ENCODE measurements at regions of chr2 and their contacts with region 1.

Region 1: GRCh38 chr2:42663106-42663780 is 94.8 kb downstream of the MTA3 start:
- DNase-seq: peak; percentile 52 to 60 (median 56)
- H3K4me3 ChIP-seq: no peak overlapping the region
- H3K4me3 Mint-ChIP-seq: no peak overlapping the region
- H3K27ac ChIP-seq: no peak overlapping the region
- H3K27ac Mint-ChIP-seq: peak overlapping the region in 1 of 7 donors; percentile 14
- H3K4me1 ChIP-seq: no peaks in the 10 kb centered on the region
- H3K4me1 Mint-ChIP-seq: peaks cover 0 to 4% (median 1%) of the 10 kb centered on the region in 4 donors
- H3K27me3 ChIP-seq: no peaks in the 10 kb centered on the region
- H3K27me3 Mint-ChIP-seq: no peaks in the 10 kb centered on the region

Region 2: DNA sequence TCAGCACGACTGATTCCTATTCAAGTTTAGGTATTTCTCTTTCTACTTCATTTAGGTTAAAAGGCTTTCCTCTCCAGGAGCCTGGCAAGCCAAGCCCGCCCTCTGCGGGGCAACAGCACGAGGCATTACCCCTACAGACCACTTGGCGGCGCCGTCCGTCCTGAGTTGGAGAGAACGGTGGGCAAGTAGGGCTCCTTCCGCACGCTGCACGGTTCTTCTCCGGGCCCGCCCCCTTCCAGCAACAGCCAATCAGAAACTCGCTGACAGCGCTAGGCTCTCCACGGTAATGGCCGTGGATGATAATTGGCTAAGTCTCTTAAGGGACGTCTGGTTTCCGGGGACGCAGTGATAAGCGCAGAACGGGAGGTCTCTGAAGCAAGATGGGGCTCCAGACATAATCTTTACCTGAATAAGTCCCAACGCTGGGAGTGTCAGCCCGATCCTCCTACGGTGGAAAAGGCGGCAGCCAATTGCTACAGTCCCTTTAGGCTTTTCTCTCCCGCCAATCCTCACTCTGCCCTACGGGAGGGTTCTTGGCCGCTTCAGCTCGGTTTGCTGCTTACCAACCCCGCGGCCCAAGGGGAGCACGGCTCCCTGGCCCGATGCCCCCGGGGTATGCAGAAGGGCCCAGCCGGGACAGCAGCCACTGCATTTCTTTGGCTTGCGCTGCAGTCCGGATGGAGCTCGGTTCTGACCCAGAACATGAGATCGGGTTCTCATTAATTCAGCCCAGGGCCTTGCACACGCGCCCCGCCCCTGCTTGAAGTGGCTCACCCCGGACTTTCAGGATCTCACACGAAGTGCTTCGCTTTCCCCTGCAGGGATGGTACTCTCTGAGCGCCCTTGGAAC is 822.3 kb before region 1 on chr2:
- CTCF ChIA-PET with region 1: no interaction called
- POLR2A ChIA-PET with region 1: no interaction called
- intact Hi-C with region 1: loop called (anchors 5 kb)
- DNase-seq: peak; percentile 97 to 98 (median 97)
- H3K4me3 ChIP-seq: peak overlapping the region; percentile 85 to 86
- H3K4me3 Mint-ChIP-seq: peak overlapping the region; percentile 90 to 100 (median 96)
- H3K27ac ChIP-seq: peak overlapping the region; percentile 75
- H3K27ac Mint-ChIP-seq: peak overlapping the region; percentile 85 to 98 (median 94)
- H3K4me1 ChIP-seq: peaks cover 10% of the 10 kb centered on the region
- H3K4me1 Mint-ChIP-seq: peaks cover 5 to 16% (median 11%) of the 10 kb centered on the region in 4 donors
- H3K27me3 ChIP-seq: peaks cover 3% of the 10 kb centered on the region
- H3K27me3 Mint-ChIP-seq: peaks cover 11 to 16% of the 10 kb centered on the region in 2 donors

Region 3: DNA sequence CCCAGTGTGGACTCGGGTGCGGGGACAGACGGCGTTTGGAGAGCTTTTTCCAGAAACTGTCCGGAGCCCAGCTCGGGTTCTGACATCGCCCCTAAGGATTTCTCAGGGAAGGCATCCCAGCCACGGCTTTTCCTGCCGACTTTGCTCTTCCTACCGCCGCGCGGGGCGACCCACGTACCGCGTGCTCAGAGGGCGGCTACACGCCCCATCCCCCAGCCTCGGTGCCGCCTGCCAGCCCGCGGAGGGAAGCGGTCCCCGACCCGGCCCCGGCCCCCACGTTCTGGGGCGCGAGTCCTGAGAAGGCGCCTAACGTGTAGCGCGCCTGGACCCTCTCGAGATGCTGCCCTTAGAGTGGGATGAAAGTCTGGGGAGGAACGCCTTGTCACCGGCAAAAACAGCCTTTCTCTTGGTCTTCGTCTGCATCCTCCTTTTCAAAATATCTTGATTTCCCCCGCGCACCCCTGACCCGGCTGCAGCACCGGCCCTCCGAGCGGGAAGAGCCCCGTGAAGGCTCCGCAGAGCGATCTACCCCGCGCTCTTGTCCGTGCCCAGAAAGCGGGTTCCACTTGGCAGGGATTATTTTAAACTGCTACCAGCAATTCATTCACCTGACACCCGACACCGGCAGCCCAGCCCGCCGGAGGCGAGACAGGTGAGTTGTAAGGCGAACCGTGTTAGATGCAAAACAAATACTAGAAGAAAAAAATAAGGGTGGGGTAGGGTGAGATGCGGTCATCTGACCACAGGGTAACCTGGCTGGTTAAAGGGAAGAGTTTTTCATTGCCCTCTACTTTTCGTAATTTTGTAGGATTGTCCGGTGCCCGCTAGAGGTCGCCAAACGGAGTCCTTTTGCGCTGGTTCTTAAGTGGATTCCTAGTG is 168.6 kb before region 1 on chr2:
- CTCF ChIA-PET with region 1: interaction called, 38 read pairs
- POLR2A ChIA-PET with region 1: no interaction called
- intact Hi-C with region 1: loop called (anchors 1 kb)
- DNase-seq: peak; percentile 69 to 74 (median 70)
- H3K4me3 ChIP-seq: peak overlapping the region; percentile 66 to 77
- H3K4me3 Mint-ChIP-seq: peak overlapping the region; percentile 91 to 98 (median 94)
- H3K27ac ChIP-seq: no peak overlapping the region
- H3K27ac Mint-ChIP-seq: peak overlapping the region in 5 of 7 donors; percentile 44 to 79 (median 69)
- H3K4me1 ChIP-seq: no peaks in the 10 kb centered on the region
- H3K4me1 Mint-ChIP-seq: peaks cover 2 to 15% (median 7%) of the 10 kb centered on the region in 4 donors
- H3K27me3 ChIP-seq: peaks cover 9% of the 10 kb centered on the region
- H3K27me3 Mint-ChIP-seq: peaks cover 11 to 22% of the 10 kb centered on the region in 2 donors

Region 4: GRCh38 chr2:42513257-42513918 is 149.9 kb before region 1 on chr2:
- CTCF ChIA-PET with region 1: interaction called, 10 read pairs
- POLR2A ChIA-PET with region 1: no interaction called
- intact Hi-C with region 1: loop called (anchors 1 kb)
- DNase-seq: peak in 2 of 5 donors; percentile 7 to 14
- H3K4me3 ChIP-seq: no peak overlapping the region
- H3K4me3 Mint-ChIP-seq: no peak overlapping the region
- H3K27ac ChIP-seq: no peak overlapping the region
- H3K27ac Mint-ChIP-seq: no peak overlapping the region
- H3K4me1 ChIP-seq: no peaks in the 10 kb centered on the region
- H3K4me1 Mint-ChIP-seq: peaks cover 0 to 5% (median 3%) of the 10 kb centered on the region in 4 donors
- H3K27me3 ChIP-seq: no peaks in the 10 kb centered on the region
- H3K27me3 Mint-ChIP-seq: peaks cover 0 to 5% of the 10 kb centered on the region in 2 donors

Region 5: DNA sequence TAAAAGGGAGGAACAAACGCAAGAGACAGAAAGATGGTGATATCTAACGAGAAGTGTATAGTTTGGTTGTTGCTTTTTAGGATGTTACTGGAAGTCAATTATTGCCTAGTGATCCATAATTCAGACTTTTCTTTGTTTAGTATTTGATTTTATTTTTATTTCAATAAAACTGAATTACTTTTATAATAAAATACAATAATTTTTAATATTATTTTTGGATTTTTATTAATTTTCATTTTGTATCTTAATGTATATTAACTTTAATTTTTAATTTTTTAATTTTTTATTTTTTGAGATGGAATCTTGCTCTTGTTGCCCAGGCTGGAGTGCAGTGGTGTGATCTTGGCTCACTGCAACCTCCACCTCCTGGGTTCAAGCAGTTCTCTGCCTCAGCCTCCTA is 39.2 kb before region 1 on chr2:
- CTCF ChIA-PET with region 1: no interaction called
- POLR2A ChIA-PET with region 1: no interaction called
- intact Hi-C with region 1: no loop called
- DNase-seq: no peak
- H3K4me3 ChIP-seq: no peak overlapping the region
- H3K4me3 Mint-ChIP-seq: no peak overlapping the region
- H3K27ac ChIP-seq: no peak overlapping the region
- H3K27ac Mint-ChIP-seq: no peak overlapping the region
- H3K4me1 ChIP-seq: no peaks in the 10 kb centered on the region
- H3K4me1 Mint-ChIP-seq: peaks cover 0 to 4% (median under 1%) of the 10 kb centered on the region in 4 donors
- H3K27me3 ChIP-seq: no peaks in the 10 kb centered on the region
- H3K27me3 Mint-ChIP-seq: no peaks in the 10 kb centered on the region

Region 6: GRCh38 chr2:42652086-42652485 is 11.2 kb before region 1 on chr2:
- CTCF ChIA-PET with region 1: interaction called, 22 read pairs
- POLR2A ChIA-PET with region 1: no interaction called
- intact Hi-C with region 1: no loop called
- DNase-seq: peak in 4 of 5 donors; percentile 21 to 43 (median 30)
- H3K4me3 ChIP-seq: no peak overlapping the region
- H3K4me3 Mint-ChIP-seq: peak overlapping the region; percentile 13 to 74 (median 55)
- H3K27ac ChIP-seq: no peak overlapping the region
- H3K27ac Mint-ChIP-seq: peak overlapping the region; percentile 15 to 90 (median 79)
- H3K4me1 ChIP-seq: peaks cover 18% of the 10 kb centered on the region
- H3K4me1 Mint-ChIP-seq: peaks cover 20 to 43% (median 25%) of the 10 kb centered on the region in 4 donors
- H3K27me3 ChIP-seq: no peaks in the 10 kb centered on the region
- H3K27me3 Mint-ChIP-seq: no peaks in the 10 kb centered on the region

Region 7: DNA sequence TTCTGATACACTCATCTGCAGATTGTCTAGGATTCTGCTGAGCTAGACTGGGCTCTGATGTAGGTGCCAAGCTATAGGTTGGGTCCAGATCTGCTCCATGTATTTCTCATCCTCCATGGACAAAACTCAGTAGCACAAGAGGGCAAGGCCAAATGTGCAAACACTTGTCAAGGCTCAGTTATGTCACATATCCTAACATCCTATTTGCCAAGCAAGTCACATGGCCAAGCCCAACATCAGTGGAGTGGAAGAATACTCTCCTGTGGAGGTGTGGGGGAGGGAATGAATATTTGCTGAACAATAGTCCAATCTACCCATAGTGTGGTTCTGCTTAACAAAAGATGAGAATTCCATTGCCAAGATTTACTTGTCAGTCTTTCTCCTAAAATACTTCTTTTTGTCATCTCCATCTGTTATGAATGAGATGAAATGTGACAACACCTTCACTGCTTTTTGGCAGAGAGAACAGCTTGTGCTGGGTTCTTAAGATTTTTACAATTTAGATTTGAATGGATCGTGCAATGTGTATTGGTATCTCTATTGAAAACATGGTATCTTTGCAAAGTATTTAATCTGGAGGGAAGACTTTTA is 10.8 kb after region 1 on chr2:
- CTCF ChIA-PET with region 1: interaction called, 12 read pairs
- POLR2A ChIA-PET with region 1: no interaction called
- intact Hi-C with region 1: no loop called
- DNase-seq: no peak
- H3K4me3 ChIP-seq: no peak overlapping the region
- H3K4me3 Mint-ChIP-seq: no peak overlapping the region
- H3K27ac ChIP-seq: no peak overlapping the region
- H3K27ac Mint-ChIP-seq: no peak overlapping the region
- H3K4me1 ChIP-seq: no peaks in the 10 kb centered on the region
- H3K4me1 Mint-ChIP-seq: peaks cover 0 to 5% (median 2%) of the 10 kb centered on the region in 4 donors
- H3K27me3 ChIP-seq: no peaks in the 10 kb centered on the region
- H3K27me3 Mint-ChIP-seq: no peaks in the 10 kb centered on the region